IMR-90 (cell line): ENCODE measurements at regions of chr10 and their contacts with region 1.

Region 1: DNA sequence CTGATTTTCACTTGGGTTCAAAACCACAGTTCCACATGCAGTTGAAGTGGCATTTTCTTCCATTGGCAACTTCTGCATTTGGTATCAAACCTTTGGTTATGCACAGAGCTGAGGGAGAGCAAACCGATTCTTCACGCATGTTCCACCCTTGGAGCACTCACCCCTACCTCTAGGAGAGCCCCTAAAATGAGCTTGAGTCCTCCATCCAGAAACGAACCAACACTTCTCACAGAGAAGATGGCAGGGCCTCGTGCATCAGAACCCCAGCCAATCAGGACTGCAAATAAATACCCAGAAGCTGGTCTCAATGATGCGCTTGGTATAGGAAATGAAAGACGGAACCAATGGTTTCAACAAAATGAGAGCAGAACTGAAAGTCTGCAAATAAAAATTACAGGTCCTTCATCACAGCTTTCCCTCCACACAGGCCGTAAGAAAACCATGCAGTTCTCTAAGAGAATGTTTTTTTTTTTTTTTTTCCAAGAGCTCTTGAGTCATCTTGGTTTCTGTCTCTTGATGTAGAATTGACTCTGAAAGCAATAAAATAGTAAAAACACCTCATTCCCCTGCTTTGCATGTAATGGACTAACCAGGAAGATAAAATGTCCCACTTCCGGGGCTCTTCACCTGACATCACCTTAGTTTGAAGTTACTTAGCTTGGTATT is 23.9 kb downstream of the KLF6 start:
- DNase-seq: peak; percentile 29
- ATAC-seq: no peak
- H3K4me3 ChIP-seq: no peak overlapping the region
- H3K27ac ChIP-seq: no peak overlapping the region
- H3K4me1 ChIP-seq: peaks cover 12% of the 10 kb centered on the region
- H3K27me3 ChIP-seq: no peaks in the 10 kb centered on the region
- CTCF ChIP-seq: no peak
- POLR2A ChIP-seq: no peak
- RAD21 ChIP-seq: no peak

Region 2: GRCh38 chr10:3393958-3394357 is 367.2 kb before region 1 on chr10:
- CTCF ChIA-PET with region 1: no interaction called
- POLR2A ChIA-PET with region 1: no interaction called
- dilution Hi-C with region 1: no loop called
- in situ Hi-C with region 1: no loop called
- intact Hi-C with region 1: loop called (anchors 5 kb)
- DNase-seq: no peak
- ATAC-seq: no peak
- H3K4me3 ChIP-seq: no peak overlapping the region
- H3K27ac ChIP-seq: no peak overlapping the region
- H3K4me1 ChIP-seq: peaks cover 8% of the 10 kb centered on the region
- H3K27me3 ChIP-seq: no peaks in the 10 kb centered on the region
- CTCF ChIP-seq: no peak
- POLR2A ChIP-seq: no peak
- RAD21 ChIP-seq: no peak

Region 3: GRCh38 chr10:3681642-3682554 is 79.3 kb before region 1 on chr10:
- CTCF ChIA-PET with region 1: no interaction called
- POLR2A ChIA-PET with region 1: no interaction called
- dilution Hi-C with region 1: no loop called
- in situ Hi-C with region 1: no loop called
- intact Hi-C with region 1: loop called (anchors 5 kb)
- DNase-seq: no peak
- ATAC-seq: no peak
- H3K4me3 ChIP-seq: no peak overlapping the region
- H3K27ac ChIP-seq: no peak overlapping the region
- H3K4me1 ChIP-seq: peaks cover 2% of the 10 kb centered on the region; the same call in 1 of the 2 replicates
- H3K27me3 ChIP-seq: no peaks in the 10 kb centered on the region
- CTCF ChIP-seq: no peak
- POLR2A ChIP-seq: no peak
- RAD21 ChIP-seq: no peak